Left cardiac atrium (tissue), 4 donors: ENCODE measurements at regions of chr6 and their contacts with region 1.

Region 1: GRCh38 chr6:52399511-52400312 is 20.4 kb upstream of the EFHC1 start:
- DNase-seq: no peak
- ATAC-seq: peak; percentile 60 to 65

Region 2: DNA sequence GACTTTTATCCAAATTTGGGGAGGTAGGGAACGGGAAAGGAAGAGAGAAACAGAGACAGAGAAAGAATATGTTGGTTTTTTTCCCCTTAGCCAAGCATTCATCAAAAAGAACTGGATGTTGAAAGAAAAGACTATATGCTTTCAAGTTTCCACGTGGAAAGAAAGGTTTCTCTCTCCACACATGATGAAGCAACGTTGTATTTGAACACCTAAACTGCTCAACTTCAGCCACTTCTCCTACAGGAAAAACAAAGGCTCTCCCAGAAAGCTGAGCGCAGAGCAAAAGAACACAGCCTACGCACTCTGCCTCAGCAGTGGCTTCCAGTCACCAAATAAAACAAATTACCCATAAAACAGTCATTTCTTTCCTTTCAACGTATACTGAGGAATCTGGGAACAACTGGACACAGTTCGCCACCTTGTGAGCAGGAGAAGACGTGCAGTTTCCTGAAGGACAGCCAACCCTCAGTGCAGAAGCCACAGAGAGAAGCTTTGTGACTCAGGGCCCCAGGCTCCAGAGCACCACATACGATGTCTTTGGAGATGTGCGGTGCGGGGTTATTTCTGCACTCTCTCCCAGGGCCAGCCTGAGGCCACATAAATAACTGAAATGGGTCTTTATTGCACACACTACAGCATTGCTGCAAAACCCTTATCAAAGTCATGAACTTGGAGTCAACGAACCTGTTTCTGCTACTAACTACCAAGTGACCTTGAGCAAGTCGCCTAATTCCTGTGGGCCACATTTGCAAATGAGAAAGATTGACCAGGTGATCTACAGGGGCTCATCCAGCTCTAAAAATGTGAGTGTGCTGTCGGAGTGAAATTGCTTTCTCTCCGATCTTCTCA is 165.5 kb before region 1 on chr6:
- intact Hi-C with region 1: no loop called
- DNase-seq: no peak
- ATAC-seq: no peak

Region 3: DNA sequence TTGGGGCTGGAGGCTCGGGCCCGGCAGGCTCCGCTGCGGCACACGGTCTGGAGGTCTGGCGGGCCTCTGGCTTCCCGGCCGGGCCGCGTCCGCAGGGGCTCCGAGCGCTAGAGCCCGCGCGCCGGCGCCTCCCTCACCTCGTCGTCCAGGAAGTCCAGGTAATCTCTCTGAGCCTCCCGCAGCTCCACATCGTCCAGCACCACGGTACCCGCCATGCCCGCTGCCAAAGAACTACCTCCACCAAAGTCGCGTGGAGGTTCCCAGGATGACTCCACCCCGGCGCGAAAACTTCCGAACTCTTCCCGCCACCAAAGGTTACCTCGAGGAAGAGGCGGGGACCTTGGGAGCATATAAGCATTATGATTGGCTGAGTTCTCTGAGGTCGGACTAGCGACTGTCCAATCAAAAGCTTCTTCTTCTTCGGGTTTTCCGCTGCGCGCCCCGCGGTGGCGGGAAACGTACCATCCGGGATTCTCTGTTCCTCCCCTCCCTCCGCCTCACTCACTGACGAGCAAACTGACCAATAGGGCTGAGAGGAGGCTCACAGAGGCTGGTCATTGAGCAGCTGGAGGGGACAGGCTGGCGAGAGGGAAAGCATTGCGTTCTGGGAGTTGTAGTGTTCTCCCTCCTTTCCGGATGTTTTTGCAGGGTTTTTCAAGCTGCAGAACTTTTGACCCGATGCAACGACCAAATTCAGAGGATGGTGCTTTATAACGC is 115.1 kb before region 1 on chr6 and contains the start of gene MCM3:
- intact Hi-C with region 1: loop called (anchors 2 to 5 kb)
- DNase-seq: peak; percentile 98
- ATAC-seq: peak; percentile 100
- total RNA-seq, gene MCM3: 27.2 to 28.4 TPM

Region 4: GRCh38 chr6:52475307-52475706 is 75.6 kb after region 1 on chr6:
- intact Hi-C with region 1: no loop called
- DNase-seq: no peak
- ATAC-seq: no peak